ENCODE measurements at regions of chr9 and their contacts with region 1.

Region 1: DNA sequence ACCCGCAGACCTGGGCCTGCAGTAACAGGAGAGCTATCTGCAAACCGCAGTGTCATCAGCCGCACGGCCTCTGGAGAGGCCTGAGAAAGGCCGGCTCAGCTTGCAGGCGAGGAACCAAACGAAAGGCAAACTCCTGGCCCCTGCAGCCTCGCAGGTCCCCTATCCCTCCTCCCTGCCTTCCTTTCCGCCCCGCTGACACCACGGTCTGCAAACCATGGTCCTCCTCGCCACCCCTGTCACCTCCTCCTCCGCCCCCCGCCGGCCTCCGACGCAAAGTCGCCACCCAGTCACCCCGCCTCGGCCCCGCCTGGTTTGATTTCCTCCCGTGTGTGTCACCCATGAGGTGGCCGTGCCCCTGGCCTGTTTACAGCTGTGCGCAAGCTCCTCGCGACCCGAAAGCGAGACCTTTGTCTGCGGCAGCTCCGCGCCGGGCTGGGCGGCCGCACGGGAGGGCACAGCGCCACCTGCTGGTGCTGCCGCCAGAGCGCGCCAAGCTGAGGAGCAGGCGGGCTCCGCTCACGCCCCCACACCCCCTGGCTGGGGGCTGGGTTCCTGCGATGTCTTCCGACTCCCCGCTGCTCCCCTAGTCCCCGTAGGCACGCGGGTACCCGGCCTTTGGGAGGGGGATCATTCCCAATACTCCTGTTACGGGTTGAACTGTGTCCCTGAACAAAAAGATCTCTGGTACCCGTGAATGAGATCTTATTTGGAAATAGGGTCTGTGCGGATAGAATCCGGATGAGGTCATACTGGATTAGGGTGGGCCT is 19.4 kb downstream of the GBGT1 start:
- DNase-seq: peak; percentile 91 to 97 (median 95)
- H3K4me3 ChIP-seq: peak overlapping the region in 1 of 4 donors; percentile 36
- H3K27ac ChIP-seq: peak overlapping the region in 3 of 5 donors; percentile 67 to 77 (median 69)
- H3K4me1 ChIP-seq: peaks cover 42 to 63% of the 10 kb centered on the region in 2 donors
- H3K27me3 ChIP-seq: no peaks in the 10 kb centered on the region
- CTCF ChIP-seq: peak; percentile 94 to 99 (median 98)
- POLR2A ChIP-seq: peak in 1 of 2 donors; percentile 66

Region 2: DNA sequence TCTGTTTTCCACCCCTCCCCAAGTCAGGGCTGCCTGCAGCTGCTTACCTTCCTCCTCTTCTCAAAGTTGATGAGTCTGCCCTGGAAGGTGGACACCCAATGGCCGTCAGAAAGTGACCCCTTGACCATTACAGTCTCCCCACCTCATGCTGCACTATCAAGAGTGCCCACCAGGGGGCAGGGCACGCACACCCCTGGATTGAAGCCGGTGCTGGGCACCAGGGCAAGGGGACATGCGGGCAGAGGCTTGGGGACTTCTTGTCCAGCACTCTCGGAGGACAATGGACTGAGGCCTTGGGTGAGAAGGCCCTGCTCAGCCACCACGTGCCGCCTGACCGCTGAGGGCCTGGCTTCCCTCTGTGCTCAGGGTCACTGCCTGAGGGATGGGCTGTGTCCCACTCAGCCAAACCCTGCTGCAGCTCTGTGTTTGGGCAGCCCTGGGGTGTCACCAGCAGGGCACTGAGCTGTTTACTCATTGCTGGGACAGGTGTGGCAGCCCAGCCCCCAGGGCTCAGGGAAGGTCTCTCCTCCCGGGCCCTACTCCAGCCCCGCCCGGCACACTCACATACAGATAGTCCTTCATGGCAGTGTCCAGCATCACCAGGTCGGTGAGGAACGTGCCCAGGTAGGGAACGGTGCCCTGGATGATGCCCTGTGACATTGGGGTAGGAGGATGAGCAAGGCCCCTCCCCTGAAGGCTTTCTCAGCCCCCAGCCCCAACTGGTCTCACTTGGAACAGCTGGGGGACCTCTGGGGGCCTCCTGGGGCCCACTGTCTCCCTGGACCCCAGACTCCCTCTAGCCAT is 40.9 kb before region 1 on chr9:
- intact Hi-C with region 1: loop called (anchors 2 kb)
- DNase-seq: peak; percentile 66 to 87 (median 79)
- H3K4me3 ChIP-seq: no peak overlapping the region
- H3K27ac ChIP-seq: peak overlapping the region in 3 of 5 donors; percentile 23 to 50 (median 39)
- H3K4me1 ChIP-seq: peaks cover 0 to 5% of the 10 kb centered on the region in 2 donors
- H3K27me3 ChIP-seq: no peaks in the 10 kb centered on the region
- CTCF ChIP-seq: peak; percentile 96 to 98 (median 97)
- POLR2A ChIP-seq: no peak

Region 3: DNA sequence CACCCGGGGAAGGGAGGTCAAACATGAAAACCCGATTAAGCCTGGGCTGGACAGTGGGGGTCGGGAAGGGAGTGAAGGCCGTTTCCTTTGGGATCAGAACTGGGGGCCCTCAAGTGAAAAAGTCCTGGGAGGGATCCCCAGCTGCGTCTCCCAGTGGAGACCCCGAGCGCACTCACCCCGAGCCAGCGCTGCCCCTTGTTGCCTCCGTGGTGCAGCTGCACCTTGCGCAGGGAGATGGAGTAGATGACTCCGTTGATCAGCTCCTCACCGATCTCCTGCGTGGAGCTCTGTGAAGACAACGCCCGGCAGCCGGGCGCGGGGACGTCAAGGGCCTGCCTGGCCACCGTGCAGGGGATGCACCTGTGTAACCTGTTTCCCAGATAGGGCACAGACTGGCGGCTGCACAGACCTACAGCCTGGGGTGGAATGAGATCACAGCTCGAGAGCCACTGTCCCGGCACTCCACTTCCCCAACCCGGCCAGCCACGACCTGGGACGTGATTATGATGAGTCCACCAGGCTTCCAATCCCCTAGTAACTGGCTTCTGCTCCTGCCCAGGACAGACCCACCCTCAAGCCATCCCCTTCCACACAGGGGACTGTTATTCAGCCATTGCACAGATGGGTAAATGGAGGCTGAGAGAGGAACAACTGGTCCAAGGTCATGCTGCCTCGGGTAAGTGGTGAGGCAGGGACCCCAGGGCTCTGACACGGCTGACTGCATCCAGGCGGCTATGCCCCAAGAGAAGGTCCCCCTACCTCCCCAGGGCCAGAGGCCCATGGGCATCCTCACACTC is 32.3 kb before region 1 on chr9:
- intact Hi-C with region 1: loop called in 1 of 2 experiments (anchors 2 kb)
- DNase-seq: peak in 2 of 7 donors; percentile 17
- H3K4me3 ChIP-seq: no peak overlapping the region
- H3K27ac ChIP-seq: peak overlapping the region; percentile 65 to 96 (median 85)
- H3K4me1 ChIP-seq: peaks cover 44 to 53% of the 10 kb centered on the region in 2 donors
- H3K27me3 ChIP-seq: no peaks in the 10 kb centered on the region
- CTCF ChIP-seq: no peak
- POLR2A ChIP-seq: no peak